ENCODE measurements at regions of chr19 and their contacts with region 1.

Region 1: DNA sequence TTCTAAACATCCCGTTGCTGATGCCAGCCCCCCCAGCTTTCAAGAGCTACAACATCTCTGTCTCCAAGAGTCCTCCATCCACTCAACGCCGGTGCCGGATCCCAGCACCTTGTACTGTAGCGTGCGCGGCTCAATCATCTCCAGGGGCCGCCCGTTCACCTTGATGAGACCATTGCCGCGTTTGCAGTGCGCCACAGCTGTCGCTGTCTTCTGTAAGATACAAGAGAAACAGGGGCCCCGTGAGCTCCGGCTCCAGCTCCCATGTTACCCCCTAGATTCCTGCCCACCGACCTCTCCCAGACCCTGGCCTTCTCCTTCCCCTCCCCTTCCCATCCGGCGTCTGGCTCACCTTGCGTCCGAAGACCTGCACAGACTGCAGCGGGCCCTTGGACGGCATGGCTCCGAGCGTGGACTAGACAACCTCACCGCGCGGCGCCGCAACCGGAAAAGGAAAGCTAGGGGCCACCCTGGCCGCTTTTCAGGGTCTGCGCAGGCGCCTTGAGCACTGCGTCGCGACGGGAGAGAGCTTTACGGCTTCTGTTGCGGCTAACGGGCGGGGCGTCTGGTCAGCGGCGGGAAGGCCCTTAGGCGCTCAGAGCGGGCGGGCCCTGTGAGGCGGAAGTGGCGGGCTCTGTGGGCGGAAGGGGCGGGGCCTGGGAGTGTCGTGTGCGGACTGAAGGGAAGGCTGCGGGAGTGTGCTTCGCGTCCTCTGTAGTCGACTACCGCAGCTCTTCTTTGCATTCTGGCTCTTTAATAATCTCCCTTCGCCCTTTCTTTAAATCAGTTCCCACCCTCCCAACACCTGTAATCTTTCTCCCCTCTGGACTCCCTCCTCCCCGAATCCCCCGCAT is at the start of gene RPS16:
- DNase-seq: peak; percentile 99
- ATAC-seq: peak; percentile 94
- H3K4me3 Mint-ChIP-seq: peak within 1 kb of the TSS; percentile 99
- H3K27ac Mint-ChIP-seq: peak within 1 kb of the TSS; percentile 100
- H3K4me1 Mint-ChIP-seq: peaks cover 54% of the 10 kb centered on the region
- H3K27me3 Mint-ChIP-seq: peaks cover 4% of the 10 kb centered on the region
- total RNA-seq, gene RPS16: 2,100 to 2,157 TPM

Region 2: DNA sequence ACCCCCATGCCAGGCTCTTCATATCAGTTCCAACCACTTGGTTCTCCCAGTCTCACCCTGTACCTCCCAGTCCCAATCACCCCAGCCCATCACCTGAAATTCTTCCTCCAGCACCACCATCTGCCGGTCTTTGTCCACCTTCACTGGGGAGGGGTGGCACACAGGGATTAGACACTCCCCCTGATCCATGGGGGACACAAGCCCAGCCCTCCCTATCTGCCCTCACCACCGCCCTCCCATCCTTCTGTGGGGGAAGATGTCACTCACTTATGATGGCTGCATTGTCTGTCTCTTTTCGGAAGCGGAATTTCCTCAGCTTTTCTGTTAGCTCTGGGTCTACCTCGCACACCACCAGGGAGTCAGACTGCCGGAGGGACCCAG is 100.6 kb before region 1 on chr19:
- CTCF ChIA-PET with region 1: no interaction called
- POLR2A ChIA-PET with region 1: interaction called, 12 read pairs
- DNase-seq: peak; percentile 57
- ATAC-seq: peak; percentile 55
- H3K4me3 Mint-ChIP-seq: peak overlapping the region; percentile 100
- H3K27ac Mint-ChIP-seq: peak overlapping the region; percentile 98
- H3K4me1 Mint-ChIP-seq: peaks cover 65% of the 10 kb centered on the region
- H3K27me3 Mint-ChIP-seq: no peaks in the 10 kb centered on the region

Region 3: GRCh38 chr19:39362682-39363657 is 72.8 kb before region 1 on chr19:
- CTCF ChIA-PET with region 1: no interaction called
- POLR2A ChIA-PET with region 1: no interaction called
- DNase-seq: no peak
- ATAC-seq: no peak
- H3K4me3 Mint-ChIP-seq: no peak overlapping the region
- H3K27ac Mint-ChIP-seq: no peak overlapping the region
- H3K4me1 Mint-ChIP-seq: no peaks in the 10 kb centered on the region
- H3K27me3 Mint-ChIP-seq: no peaks in the 10 kb centered on the region

Region 4: GRCh38 chr19:39390755-39391592 is 44.8 kb before region 1 on chr19 and contains the starts of genes MED29 and PAF1:
- CTCF ChIA-PET with region 1: interaction called, 10 read pairs
- POLR2A ChIA-PET with region 1: interaction called, 39 read pairs
- DNase-seq: peak; percentile 99
- ATAC-seq: peak; percentile 95
- H3K4me3 Mint-ChIP-seq: peak within 1 kb of the TSS; percentile 95
- H3K27ac Mint-ChIP-seq: peak within 1 kb of the TSS; percentile 100
- H3K4me1 Mint-ChIP-seq: peaks cover 45% of the 10 kb centered on the region
- H3K27me3 Mint-ChIP-seq: no peaks in the 10 kb centered on the region
- total RNA-seq, gene MED29: 32.6 to 39.3 TPM
- total RNA-seq, gene PAF1: 48.2 to 48.9 TPM

Region 5: DNA sequence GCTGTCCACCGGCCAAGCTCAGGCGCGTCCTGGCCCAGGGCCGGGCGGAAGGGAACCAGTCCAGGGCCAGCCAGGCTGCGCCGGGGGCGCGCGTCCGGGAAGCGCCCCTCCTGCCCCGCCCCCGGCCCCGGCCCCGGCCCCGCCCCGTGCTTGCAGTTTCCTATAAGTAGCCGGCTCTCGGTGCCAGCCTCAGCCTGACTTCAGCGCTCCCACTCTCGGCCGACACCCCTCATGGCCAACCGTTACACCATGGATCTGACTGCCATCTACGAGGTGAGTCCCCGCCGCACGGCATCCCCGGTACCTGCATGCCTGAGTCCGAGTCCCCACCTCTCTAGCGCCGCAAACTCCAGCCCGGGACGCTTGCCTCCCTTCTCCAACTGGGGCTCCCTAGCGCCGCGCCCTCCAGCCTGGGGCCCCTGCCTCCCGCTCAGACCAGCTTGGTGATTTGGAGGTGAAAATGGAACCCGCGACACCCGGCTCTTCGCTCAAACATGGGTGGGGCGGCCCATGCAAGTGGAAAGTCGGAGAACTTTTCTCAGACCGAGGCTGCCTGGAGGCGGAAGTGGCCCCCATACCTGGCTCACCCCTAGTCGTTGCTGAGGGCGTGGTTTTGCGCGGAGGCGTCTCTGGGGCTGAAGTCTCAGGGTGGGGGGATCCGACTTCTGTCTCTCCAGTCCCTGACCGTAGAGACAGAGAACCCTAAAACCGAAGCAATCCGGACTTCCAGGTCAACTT is 28.9 kb before region 1 on chr19 and contains the start of gene ZFP36:
- CTCF ChIA-PET with region 1: interaction called, 33 read pairs
- POLR2A ChIA-PET with region 1: interaction called, 58 read pairs
- DNase-seq: peak; percentile 90
- ATAC-seq: peak; percentile 41
- H3K4me3 Mint-ChIP-seq: peak within 1 kb of the TSS; percentile 97
- H3K27ac Mint-ChIP-seq: peak within 1 kb of the TSS; percentile 99
- H3K4me1 Mint-ChIP-seq: peaks cover 60% of the 10 kb centered on the region
- H3K27me3 Mint-ChIP-seq: no peaks in the 10 kb centered on the region
- total RNA-seq, gene ZFP36: 72.4 to 91.4 TPM

Region 6: DNA sequence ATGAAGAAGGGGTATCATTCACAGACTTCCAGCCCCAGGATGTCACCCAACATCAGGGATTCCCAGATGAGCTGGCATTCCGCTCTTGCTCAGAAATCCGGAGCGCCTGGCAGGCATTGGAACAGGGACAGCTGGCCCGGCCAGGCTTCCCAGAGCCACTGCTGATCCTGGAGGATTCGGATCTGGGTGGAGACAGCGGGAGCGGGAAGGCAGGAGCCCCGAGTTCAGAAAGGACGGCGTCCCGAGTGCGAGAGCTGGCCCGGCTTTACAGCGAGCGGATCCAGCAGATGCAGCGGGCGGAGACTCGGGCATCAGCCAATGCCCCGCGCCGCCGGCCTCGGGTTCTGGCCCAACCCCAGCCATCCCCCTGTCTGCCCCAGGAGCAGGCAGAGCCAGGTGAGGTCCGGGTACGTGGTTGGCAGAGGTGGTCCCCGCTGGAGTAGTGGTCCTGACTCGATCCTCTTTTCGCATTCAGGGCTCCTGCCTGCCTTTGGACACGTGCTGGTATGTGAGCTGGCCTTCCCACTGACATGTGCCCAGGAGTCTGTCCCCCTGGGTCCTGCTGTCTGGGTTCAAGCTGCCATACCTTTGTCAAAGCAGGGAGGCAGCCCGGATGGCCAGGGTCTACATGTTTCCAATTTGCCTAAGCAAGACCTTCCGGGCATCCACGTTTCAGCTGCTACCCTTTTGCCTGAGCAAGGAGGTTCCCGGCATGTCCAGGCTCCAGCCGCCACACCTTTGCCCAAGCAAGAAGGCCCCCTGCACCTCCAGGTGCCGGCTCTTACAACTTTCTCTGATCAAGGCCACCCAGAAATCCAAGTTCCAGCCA is 12.3 kb before region 1 on chr19:
- CTCF ChIA-PET with region 1: interaction called, 6 read pairs
- POLR2A ChIA-PET with region 1: interaction called, 31 read pairs
- DNase-seq: no peak
- ATAC-seq: no peak
- H3K4me3 Mint-ChIP-seq: no peak overlapping the region
- H3K27ac Mint-ChIP-seq: no peak overlapping the region
- H3K4me1 Mint-ChIP-seq: no peaks in the 10 kb centered on the region
- H3K27me3 Mint-ChIP-seq: no peaks in the 10 kb centered on the region

Region 7: DNA sequence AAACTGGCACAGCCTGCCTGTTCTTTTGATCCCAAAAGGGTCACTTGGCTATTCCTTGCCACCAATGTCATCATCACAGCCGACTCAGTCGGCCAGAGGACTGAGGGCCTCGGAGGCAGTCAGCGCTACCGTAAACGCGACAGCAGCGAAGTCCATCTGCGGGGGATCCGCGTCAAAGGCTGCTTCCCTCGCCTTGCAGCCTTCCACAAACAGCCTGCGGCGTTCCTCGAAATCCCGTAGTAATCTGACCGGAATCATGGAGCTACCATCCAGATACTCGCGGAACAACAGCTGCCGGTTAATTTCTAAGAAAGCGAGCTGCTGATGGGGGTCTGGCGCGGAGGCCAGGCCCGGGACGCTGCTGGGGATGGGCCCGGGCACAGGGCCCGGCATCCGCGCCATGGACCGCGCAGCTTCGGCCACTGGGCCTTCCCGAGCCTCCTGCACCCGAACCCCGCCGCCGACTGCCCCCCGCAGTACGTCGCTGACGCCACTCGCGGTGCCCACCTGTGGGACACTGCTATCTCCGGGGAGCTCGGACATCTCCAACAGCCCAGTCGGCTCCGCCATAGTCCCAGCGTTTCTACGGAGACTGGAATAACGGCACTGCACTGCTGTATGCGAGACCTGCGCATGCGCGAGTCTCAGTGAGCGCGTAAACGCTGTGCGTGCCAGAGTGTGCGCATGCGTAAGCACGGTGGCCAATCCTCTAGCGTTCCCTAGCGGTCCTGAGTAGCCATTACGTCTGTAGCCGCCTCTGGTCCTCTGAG is 96.7 kb after region 1 on chr19 and contains the start of gene EID2B:
- CTCF ChIA-PET with region 1: interaction called, 30 read pairs
- POLR2A ChIA-PET with region 1: interaction called, 9 read pairs
- DNase-seq: peak; percentile 95
- ATAC-seq: peak; percentile 93
- H3K4me3 Mint-ChIP-seq: peak within 1 kb of the TSS; percentile 92
- H3K27ac Mint-ChIP-seq: peak within 1 kb of the TSS; percentile 87
- H3K4me1 Mint-ChIP-seq: peaks cover 23% of the 10 kb centered on the region
- H3K27me3 Mint-ChIP-seq: no peaks in the 10 kb centered on the region
- total RNA-seq, gene EID2B: 4.1 to 4.3 TPM

Region 8: DNA sequence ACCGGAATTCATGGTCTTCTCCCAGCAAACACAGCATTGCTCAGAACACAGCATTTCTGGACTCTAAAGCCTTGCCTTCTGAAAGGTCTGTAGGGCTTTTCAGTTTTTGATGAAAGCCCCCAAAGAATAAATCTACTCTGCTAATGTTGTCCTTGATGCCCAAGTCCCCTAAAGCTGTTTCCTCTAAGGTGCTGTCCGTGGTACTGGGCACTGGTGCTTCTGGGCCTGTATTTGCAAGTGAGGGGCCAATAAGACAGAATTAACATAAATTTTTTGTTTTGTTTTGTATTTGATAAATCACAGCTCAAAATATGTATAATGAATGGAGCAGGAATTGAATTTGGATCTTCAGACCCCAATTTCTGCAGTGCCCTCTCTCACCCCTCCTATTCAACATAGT is 154.5 kb after region 1 on chr19:
- CTCF ChIA-PET with region 1: no interaction called
- POLR2A ChIA-PET with region 1: no interaction called
- DNase-seq: peak; percentile 36
- ATAC-seq: no peak
- H3K4me3 Mint-ChIP-seq: no peak overlapping the region
- H3K27ac Mint-ChIP-seq: no peak overlapping the region
- H3K4me1 Mint-ChIP-seq: no peaks in the 10 kb centered on the region
- H3K27me3 Mint-ChIP-seq: peaks cover 13% of the 10 kb centered on the region